ENCODE measurements at regions of chr15 and their contacts with region 1.

Region 1: GRCh38 chr15:78108299-78109084 is 16.1 kb downstream of the SH2D7 start:
- DNase-seq: peak; percentile 83 to 85
- ATAC-seq: peak; percentile 81 to 92 (median 89)
- H3K4me3 ChIP-seq: no peak overlapping the region
- H3K27ac ChIP-seq: no peak overlapping the region
- H3K4me1 ChIP-seq: peaks cover 0 to 38% (median 0%) of the 10 kb centered on the region in 9 donors
- H3K27me3 ChIP-seq: no peaks in the 10 kb centered on the region
- CTCF ChIP-seq: peak; percentile 89 to 97 (median 95)

Region 2: GRCh38 chr15:77959432-77959879 is 149.0 kb before region 1 on chr15:
- intact Hi-C with region 1: loop called in 5 of 10 experiments (anchors 2 kb)
- DNase-seq: peak; percentile 75 to 79
- ATAC-seq: peak; percentile 96 to 98 (median 97)
- H3K4me3 ChIP-seq: peak overlapping the region in 5 of 10 donors; percentile 24 to 38 (median 27)
- H3K27ac ChIP-seq: no peak overlapping the region
- H3K4me1 ChIP-seq: peaks cover 0 to 8% (median 4%) of the 10 kb centered on the region in 9 donors
- H3K27me3 ChIP-seq: no peaks in the 10 kb centered on the region
- CTCF ChIP-seq: peak; percentile 96 to 99 (median 97)

Region 3: GRCh38 chr15:78000091-78000926 is 108.2 kb before region 1 on chr15:
- intact Hi-C with region 1: loop called in 3 of 10 experiments (anchors 2 to 5 kb)
- DNase-seq: peak; percentile 57 to 74
- ATAC-seq: peak; percentile 43 to 77 (median 60)
- H3K4me3 ChIP-seq: no peak overlapping the region
- H3K27ac ChIP-seq: no peak overlapping the region
- H3K4me1 ChIP-seq: peaks cover 9 to 45% (median 25%) of the 10 kb centered on the region in 9 donors
- H3K27me3 ChIP-seq: no peaks in the 10 kb centered on the region
- CTCF ChIP-seq: peak in 8 of 9 donors; percentile 37 to 62 (median 54)

Region 4: GRCh38 chr15:78195735-78196201 is 87.3 kb after region 1 on chr15:
- intact Hi-C with region 1: loop called in 9 of 10 experiments (anchors 1 to 10 kb)
- DNase-seq: peak in 1 of 2 donors; percentile 2
- ATAC-seq: peak in 5 of 8 donors; percentile 70 to 82 (median 78)
- H3K4me3 ChIP-seq: no peak overlapping the region
- H3K27ac ChIP-seq: no peak overlapping the region
- H3K4me1 ChIP-seq: no peaks in the 10 kb centered on the region
- H3K27me3 ChIP-seq: no peaks in the 10 kb centered on the region
- CTCF ChIP-seq: peak; percentile 34 to 80 (median 71)

Region 5: GRCh38 chr15:78241007-78241406 is 132.5 kb after region 1 on chr15:
- intact Hi-C with region 1: loop called (anchors 1 to 5 kb)
- DNase-seq: peak; percentile 87 to 90
- ATAC-seq: peak; percentile 89 to 96 (median 93)
- H3K4me3 ChIP-seq: no peak overlapping the region
- H3K27ac ChIP-seq: no peak overlapping the region
- H3K4me1 ChIP-seq: peaks cover 0 to 12% (median 8%) of the 10 kb centered on the region in 9 donors
- H3K27me3 ChIP-seq: no peaks in the 10 kb centered on the region
- CTCF ChIP-seq: peak; percentile 82 to 94 (median 91)

Measured in heart right ventricle (tissue), 16 donors.